Left colon (tissue), 2 donors: ENCODE measurements at regions of chr15 and their contacts with region 1.

Region 1: DNA sequence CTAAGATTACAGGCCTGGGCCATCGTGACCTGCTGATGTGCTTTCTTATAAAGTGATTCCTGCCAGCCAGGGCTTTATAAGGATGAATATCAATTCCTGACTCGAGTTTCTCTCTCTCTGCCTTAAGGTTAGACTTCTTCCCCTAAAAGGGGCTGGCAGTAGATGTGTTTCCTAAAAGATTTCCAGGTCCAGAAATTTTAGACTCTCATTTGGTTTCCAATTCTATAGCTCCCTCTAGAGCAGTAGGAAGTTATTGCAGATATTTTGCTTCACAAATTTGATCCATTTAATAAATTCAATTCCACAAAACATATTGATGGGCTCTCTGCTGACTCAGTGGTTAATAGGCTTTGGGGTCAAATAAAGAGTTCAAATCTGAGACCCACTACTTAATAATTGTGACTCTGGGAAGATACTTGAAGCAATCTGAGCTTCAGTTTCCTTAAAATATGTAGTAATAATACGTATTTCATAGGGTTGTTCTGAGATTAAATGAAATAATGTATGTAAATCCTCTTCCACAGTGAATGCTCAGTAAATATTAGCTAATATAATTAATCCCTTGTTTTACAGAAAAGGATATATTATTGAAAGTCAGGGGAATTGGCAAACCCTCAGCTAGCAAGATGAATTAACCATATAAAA is 2.1 kb downstream of the TRIM69 start:
- DNase-seq: no peak
- ATAC-seq: peak; percentile 63

Region 2: GRCh38 chr15:44584162-44584749 is 154.2 kb before region 1 on chr15:
- intact Hi-C with region 1: loop called in 1 of 2 experiments (anchors 10 kb)
- DNase-seq: peak in 1 of 2 donors; percentile 61
- ATAC-seq: peak; percentile 84

Region 3: DNA sequence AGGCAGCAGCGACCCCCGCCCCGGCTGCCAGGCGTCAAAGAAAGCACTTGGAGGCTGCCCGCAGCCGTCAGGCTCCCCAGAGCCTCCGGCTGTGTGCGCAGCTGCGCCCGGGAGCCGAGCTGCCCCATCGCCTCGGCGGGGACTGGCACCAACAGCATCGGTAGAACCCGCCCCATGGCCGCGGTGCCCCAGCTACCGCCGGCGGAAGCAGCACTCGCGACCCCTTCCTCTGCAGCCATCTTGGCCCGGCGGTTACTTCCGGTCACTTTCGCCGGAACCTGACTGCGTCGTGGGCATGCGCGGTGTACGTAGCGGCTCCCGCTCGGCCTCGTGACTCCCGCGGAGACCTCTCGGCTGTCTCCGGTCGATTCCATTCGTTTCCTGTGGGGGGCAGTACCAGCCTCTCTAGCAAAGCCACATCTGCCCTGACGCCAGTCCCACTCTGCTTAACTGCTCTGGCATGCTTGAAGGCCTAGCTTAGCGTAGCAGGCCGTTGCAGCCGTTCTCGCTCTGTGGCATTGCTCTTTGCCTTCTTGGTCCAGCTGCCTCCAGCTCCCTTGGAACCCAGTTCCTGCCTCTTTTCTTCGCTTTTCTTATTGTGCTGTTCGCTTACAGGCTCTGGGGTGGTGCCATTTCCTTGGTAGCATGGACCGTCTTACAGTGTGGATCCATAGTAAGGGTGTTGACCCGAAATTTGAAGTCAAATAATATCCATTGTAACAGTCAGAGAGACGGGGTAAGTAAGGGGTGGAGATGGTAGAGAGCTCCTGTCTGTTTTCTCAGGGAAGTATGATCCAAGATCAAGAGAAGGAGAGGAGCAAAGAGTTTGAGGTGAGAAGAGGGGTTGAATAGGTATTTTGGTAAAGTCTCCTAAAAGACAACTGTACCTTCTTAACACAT is 74.8 kb before region 1 on chr15 and contains the start of gene SPG11:
- intact Hi-C with region 1: loop called (anchors 5 kb)
- DNase-seq: peak; percentile 98 to 99
- ATAC-seq: peak; percentile 90
- total RNA-seq, gene SPG11: 90.7 to 113 TPM